Motor neuron (in vitro differentiated cells): ENCODE measurements at regions of chr1 and their contacts with region 1.

Region 1: GRCh38 chr1:110766025-110766647 is 91.4 kb upstream of the KCNA3 start:
- ATAC-seq: peak in 5 of 8 experiments; percentile 39 to 84 (median 65)
- H3K4me3 ChIP-seq: no peak overlapping the region
- H3K27ac ChIP-seq: no peak overlapping the region
- H3K4me1 ChIP-seq: no peaks in the 10 kb centered on the region

Region 2: GRCh38 chr1:110630839-110631663 is 135.1 kb before region 1 on chr1:
- in situ Hi-C with region 1: loop called in 5 of 9 experiments (anchors 10 to 25 kb)
- ATAC-seq: peak; percentile 72 to 99 (median 99)
- H3K4me3 ChIP-seq: no peak overlapping the region
- H3K27ac ChIP-seq: no peak overlapping the region
- H3K4me1 ChIP-seq: no peaks in the 10 kb centered on the region

Region 3: DNA sequence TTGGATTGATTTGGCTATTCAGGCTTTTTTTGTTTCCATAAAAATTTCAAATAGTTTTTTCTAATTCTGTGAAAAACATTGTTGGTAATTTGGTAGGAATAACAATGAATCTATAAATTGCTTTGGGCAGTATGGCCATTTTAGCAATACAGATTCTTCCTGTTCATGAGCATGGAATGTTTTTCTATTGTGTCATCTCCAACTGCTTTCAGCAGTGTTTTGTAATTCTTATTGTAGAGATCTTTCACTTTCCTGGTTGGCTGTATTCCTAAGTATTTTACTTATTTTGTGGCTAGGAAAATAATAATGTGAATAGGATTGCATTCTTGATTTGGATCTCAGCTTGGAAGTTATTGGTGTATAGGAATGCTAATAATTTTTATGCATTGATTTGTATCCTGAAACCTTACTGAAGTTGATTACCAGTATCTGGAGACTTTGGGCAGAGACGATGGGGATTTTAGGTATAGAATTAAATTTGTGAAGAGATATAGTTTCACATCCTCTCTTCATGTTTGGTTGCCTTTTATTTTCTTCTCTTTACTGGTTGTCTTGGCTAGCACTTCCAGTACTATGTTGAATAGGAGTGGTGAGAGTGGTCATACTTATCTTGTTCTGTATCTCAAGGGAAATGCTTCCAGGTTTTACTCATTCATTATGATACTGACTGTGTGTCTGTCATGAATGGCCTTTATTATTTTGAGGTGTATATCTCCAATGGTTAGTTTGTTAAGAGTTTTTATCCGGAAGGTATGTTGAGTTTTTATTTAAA is 316.5 kb after region 1 on chr1:
- in situ Hi-C with region 1: no loop called
- ATAC-seq: no peak
- H3K4me3 ChIP-seq: no peak overlapping the region
- H3K27ac ChIP-seq: no peak overlapping the region
- H3K4me1 ChIP-seq: no peaks in the 10 kb centered on the region